A673 (cell line): ENCODE measurements at regions of chr12 and their contacts with region 1.

Region 1: GRCh38 chr12:108179305-108179704 is 50.2 kb downstream of the WSCD2 start:
- DNase-seq: no peak
- H3K4me3 ChIP-seq: no peak overlapping the region
- H3K27ac ChIP-seq: no peak overlapping the region
- H3K4me1 ChIP-seq: no peaks in the 10 kb centered on the region
- H3K27me3 ChIP-seq: peaks cover 27% of the 10 kb centered on the region
- CTCF ChIP-seq: no peak

Region 2: GRCh38 chr12:106247674-106248311 is 1931.5 kb before region 1 on chr12 and contains the start of gene CKAP4:
- CTCF ChIA-PET with region 1: no interaction called
- POLR2A ChIA-PET with region 1: no interaction called
- intact Hi-C with region 1: no loop called
- DNase-seq: peak; percentile 83
- H3K4me3 ChIP-seq: peak within 1 kb of the TSS; percentile 97
- H3K27ac ChIP-seq: peak within 1 kb of the TSS; percentile 86
- H3K4me1 ChIP-seq: peaks cover 14% of the 10 kb centered on the region
- H3K27me3 ChIP-seq: no peaks in the 10 kb centered on the region
- CTCF ChIP-seq: no peak
- total RNA-seq, gene CKAP4: 81.8 and 89.4 TPM in 2 replicates

Region 3: DNA sequence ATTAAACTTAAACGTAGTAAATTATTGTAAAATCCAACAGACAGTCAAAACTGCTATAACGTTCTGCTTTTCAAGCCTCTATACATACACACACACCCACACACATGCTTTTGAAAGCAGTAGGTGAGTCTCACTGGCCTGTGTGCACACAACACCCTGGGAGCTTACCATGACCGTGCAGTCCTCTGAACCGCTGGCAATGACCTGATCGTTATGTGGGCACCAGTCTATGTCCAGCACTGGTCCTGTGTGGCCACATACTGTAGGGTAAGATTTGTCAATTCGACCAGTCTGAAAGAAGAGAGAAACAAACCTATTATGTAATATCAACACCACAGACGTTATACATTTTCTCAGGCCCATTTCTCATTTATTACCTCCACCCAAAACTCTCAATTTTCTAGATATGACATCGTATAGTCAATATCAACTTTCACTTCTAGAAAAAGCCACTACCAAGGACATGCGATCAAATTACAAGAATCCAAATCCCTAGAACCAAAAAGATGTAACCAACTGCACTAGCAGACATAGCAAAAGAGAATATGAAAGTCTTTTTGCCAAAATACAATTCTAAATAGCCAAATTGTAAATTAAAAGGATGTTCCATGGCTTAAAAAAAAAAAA is 498.9 kb after region 1 on chr12:
- CTCF ChIA-PET with region 1: no interaction called
- POLR2A ChIA-PET with region 1: interaction called, 11 read pairs
- intact Hi-C with region 1: no loop called
- DNase-seq: no peak
- H3K4me3 ChIP-seq: no peak overlapping the region
- H3K27ac ChIP-seq: no peak overlapping the region
- H3K4me1 ChIP-seq: peaks cover 15% of the 10 kb centered on the region
- H3K27me3 ChIP-seq: no peaks in the 10 kb centered on the region
- CTCF ChIP-seq: no peak